ENCODE measurements at regions of chr1 and their contacts with region 1.

Region 1: DNA sequence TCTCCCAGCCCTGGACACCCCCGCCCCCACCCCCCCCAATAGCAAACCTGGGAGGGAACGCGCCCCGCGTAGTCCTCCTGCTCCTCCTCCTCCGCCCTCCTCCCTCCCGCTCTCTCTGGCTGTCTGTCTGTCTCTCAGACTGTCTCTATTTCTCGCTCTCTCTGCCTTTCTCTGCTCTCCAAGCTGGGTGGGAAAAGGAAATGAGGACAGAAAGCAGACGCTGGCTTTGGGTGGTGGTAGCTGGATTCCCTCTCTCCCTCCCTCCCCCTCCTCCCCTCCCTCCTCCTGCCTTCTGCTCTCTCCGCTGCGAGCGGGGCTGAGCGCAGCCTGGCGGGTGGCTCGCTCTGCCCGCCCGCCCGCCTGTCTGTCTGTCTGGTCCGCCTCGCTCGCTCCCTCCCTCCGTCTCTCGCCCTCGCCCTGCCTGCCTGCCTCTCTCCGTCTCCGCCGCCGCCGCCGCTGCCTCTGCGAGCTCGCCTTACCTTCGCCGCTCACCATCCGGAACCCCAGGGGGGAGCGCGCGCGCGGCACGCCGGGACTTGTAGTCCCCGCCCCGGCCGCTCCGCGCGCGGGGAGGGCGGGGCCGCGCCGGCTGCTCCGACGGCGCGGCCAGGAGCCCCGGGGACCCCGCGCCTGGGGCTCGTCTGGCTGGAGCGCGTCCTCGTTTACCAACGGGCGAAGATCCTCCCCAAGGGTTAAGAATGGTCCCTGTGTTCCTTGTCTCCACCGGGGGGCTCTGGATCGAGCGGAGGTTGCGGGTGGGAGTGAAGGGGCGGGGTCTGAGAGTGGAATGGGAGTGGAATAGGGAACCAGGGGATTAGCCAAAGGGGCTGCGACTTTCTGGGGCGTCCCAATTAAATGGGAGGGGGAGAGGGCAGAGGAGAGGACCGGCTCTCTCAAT is at the start of gene AHDC1:
- DNase-seq: peak; percentile 74 to 95
- H3K4me3 ChIP-seq: peak within 1 kb of the TSS; percentile 74 to 91
- H3K27ac ChIP-seq: peak within 1 kb of the TSS; percentile 89 to 91
- H3K4me1 ChIP-seq: peaks cover 25 to 32% of the 10 kb centered on the region in 2 donors
- H3K27me3 ChIP-seq: no peaks in the 10 kb centered on the region
- CTCF ChIP-seq: peak in 2 of 3 experiments; percentile 32 to 38
- total RNA-seq, gene AHDC1: 205 TPM

Region 2: DNA sequence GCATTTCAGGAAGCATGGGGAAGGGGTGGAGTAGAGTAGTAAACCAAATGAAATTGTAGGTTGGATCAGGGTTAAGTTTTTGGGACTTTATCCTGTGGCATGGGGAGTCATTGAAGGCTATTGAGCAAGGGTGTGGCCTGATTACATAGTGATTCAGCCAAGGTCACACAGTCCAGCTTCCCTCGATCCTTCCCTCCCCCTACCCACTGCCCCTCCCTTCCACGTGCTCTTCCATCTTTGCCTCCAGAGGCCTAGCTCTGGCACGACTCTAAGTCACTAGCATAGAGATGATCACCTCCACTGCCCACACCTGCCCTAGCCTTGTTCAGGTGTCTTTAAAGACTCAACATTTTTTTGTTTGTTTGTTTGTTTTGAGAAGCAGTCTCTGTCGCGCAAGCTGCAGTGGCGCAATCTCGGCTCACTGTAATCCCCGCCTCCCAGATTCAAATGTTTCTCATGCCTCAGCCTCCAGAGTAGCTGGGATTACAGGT is 411.8 kb before region 1 on chr1:
- intact Hi-C with region 1: no loop called
- DNase-seq: peak in 1 of 2 donors; percentile 52
- H3K4me3 ChIP-seq: no peak overlapping the region
- H3K27ac ChIP-seq: no peak overlapping the region
- H3K4me1 ChIP-seq: no peaks in the 10 kb centered on the region
- H3K27me3 ChIP-seq: no peaks in the 10 kb centered on the region
- CTCF ChIP-seq: no peak

Region 3: GRCh38 chr1:27300341-27301051 is 303.4 kb before region 1 on chr1:
- intact Hi-C with region 1: loop called (anchors 2 kb)
- DNase-seq: peak; percentile 46 to 88
- H3K4me3 ChIP-seq: no peak overlapping the region
- H3K27ac ChIP-seq: peak overlapping the region; percentile 67 to 71
- H3K4me1 ChIP-seq: peaks cover 0 to 15% of the 10 kb centered on the region in 2 donors
- H3K27me3 ChIP-seq: no peaks in the 10 kb centered on the region
- CTCF ChIP-seq: peak; percentile 98 to 99 (median 99)

Region 4: DNA sequence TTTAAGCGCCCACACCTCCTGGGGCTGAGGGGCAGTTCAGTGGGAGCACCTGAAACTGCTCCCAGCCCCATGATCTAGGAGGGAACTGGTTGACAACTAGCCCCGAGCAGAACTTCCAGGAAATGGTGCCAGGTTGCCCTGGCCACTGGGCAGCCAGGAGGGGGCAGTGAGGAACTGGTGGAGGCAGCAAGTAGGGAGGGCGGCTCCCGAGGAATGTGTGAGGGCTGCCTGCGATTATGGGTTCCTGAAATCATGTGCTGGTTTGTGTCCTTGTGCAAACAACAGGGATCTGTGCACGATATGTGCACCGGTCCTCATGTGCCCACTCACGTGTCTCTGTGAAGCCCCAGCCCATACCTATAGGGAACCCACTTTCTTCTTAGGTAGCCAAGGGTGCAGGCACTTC is 201.6 kb before region 1 on chr1:
- intact Hi-C with region 1: loop called (anchors 1 kb)
- DNase-seq: peak; percentile 39 to 91
- H3K4me3 ChIP-seq: no peak overlapping the region
- H3K27ac ChIP-seq: peak overlapping the region; percentile 72 to 75
- H3K4me1 ChIP-seq: peaks cover 18 to 34% of the 10 kb centered on the region in 2 donors
- H3K27me3 ChIP-seq: no peaks in the 10 kb centered on the region
- CTCF ChIP-seq: peak; percentile 70 to 80 (median 76)

Region 5: DNA sequence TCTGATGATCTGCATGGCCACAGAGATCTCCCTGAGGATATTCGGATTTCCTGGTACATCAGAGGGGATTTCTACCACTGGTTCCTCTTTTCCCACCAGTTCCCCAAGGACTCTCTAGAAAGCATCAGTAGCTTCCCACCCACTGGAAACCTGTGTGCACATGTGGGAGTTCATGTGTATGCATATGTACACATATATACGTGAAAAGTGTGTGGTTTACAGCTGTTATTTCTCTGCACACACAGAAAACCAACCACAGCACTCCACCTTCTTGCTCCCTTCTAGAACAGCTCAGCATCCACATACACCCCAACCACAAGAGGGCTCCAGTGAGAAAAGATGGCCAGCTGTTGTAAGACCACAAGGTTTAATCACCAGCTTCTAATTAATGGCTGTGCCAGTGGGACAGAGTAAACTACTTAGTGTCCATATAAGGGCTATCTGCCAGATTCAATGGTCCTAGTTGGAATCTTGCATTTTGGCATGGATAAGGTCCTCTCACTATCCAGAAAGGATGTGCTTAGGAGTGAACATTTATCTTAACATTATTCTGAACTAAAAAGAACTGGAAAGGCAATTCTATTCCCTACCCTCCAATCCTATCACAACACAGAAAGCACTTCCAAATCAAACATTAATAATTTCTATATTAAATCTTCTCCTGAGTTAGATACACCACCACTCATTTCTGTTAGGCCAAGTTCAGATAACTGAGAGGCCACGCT is 187.4 kb before region 1 on chr1:
- intact Hi-C with region 1: loop called (anchors 5 kb)
- DNase-seq: no peak
- H3K4me3 ChIP-seq: no peak overlapping the region
- H3K27ac ChIP-seq: no peak overlapping the region
- H3K4me1 ChIP-seq: peaks cover 4 to 33% of the 10 kb centered on the region in 2 donors
- H3K27me3 ChIP-seq: no peaks in the 10 kb centered on the region
- CTCF ChIP-seq: peak in 2 of 3 experiments; percentile 33 to 51

Region 6: DNA sequence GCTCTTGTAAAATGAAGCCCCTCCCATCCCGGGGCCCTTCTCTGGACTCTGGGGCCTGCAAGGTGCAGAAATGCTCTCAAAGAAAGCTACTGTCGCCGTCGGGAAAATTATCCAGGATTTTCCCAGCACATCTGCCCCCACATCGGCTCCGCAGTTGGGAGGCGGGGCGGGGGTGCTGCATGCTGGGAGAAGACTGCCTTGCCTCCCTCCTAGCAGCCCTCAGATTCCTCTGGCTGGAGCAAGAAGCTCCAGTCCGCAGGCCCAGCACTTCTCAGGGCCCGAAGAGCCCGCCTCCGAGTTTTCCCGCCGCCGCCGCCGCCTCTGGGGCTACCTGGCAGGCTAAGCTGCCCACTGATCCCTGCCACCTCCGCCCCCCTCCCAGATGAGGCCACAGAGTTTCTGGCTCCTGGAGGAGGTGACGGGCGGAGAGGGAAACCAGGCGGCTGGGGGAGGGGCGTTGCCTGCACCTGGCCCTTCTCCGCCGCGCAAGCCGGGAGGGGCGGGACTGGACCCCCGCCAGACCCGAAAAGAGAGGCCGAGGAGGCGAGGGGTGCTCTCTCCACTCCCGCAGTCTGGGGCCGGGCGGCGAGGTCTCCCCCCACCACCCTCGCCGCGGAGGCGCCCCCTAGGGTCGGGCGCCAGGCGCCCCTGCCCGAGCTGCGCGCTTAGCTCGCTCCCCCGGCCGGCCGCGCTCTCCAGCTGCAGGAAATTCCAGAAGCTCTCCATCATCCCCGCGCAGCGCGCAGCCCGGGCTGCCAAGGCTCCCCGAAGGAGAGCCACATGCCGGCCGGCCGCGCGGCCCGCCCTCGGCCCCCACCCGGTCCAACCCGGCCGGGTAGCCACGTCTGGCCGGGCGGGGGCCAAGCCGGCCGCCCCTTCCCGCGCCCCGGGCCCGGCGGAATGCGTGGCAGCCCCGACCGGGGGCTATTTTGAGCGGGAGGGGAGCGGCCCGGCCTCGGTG is 28.8 kb before region 1 on chr1:
- intact Hi-C with region 1: loop called (anchors 2 kb)
- DNase-seq: peak in 1 of 2 donors; percentile 90
- H3K4me3 ChIP-seq: peak overlapping the region; percentile 52 to 64
- H3K27ac ChIP-seq: peak overlapping the region; percentile 93 to 96
- H3K4me1 ChIP-seq: peaks cover 60 to 80% of the 10 kb centered on the region in 2 donors
- H3K27me3 ChIP-seq: no peaks in the 10 kb centered on the region
- CTCF ChIP-seq: peak; percentile 30 to 45 (median 30)

Region 7: GRCh38 chr1:28369371-28370238 is 765.7 kb after region 1 on chr1 and contains the start of gene PHACTR4:
- intact Hi-C with region 1: no loop called
- DNase-seq: peak; percentile 59 to 94
- H3K4me3 ChIP-seq: peak within 1 kb of the TSS; percentile 86 to 89
- H3K27ac ChIP-seq: peak within 1 kb of the TSS; percentile 92 to 94
- H3K4me1 ChIP-seq: peaks cover 8 to 17% of the 10 kb centered on the region in 2 donors
- H3K27me3 ChIP-seq: no peaks in the 10 kb centered on the region
- CTCF ChIP-seq: no peak
- total RNA-seq, gene PHACTR4: 33.0 TPM

Measured in ascending aorta (tissue), 2 donors.